ENCODE measurements at regions of chr16 and their contacts with region 1.

Region 1: GRCh38 chr16:56700195-56700594 is 17.9 kb downstream of the MT1X start:
- DNase-seq: no peak
- ATAC-seq: no peak

Region 2: DNA sequence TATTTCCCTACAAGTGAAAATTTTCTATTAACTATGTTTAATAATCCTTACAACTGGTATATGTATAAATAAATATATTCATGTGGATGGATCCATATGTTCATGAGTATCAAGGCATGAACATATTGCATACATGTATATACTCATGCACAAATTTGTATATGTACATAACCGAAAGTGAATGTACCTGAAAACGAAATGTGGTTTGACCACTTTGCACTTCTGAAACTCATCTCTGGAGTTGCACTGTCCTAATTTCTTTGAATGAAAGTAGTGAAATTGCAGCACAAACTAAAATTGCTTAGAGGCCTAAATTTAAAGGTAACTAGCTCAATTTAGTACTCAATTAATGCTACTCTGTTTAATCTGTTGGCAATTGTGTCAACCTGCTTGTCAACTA is 536.3 kb before region 1 on chr16:
- intact Hi-C with region 1: no loop called
- DNase-seq: no peak
- ATAC-seq: no peak

Region 3: DNA sequence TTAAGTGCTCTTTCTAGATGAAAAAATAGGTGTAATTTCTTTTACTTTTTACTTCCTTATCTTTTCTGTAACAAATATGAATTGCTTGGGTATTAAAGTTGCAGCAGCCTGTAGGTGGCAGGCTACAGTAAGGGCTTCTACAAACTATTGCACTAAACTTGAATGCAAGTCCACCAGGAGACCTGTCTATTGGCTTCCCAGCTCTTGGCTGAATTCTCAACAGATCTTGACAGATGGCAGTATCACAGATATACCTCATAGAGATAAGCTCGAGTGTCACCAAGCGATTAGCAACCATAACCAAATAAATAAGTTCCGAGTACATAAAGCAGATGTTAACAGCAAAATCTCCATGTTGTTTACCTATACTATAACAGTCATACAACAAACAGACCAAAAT is 186.2 kb before region 1 on chr16:
- intact Hi-C with region 1: loop called (anchors 5 kb)
- DNase-seq: no peak
- ATAC-seq: peak; percentile 82

Region 4: GRCh38 chr16:56576585-56577293 is 123.5 kb before region 1 on chr16:
- intact Hi-C with region 1: loop called (anchors 2 kb)
- DNase-seq: peak; percentile 81
- ATAC-seq: peak; percentile 90

Region 5: GRCh38 chr16:56600398-56600999 is 99.7 kb before region 1 on chr16:
- intact Hi-C with region 1: loop called (anchors 5 kb)
- DNase-seq: no peak
- ATAC-seq: peak; percentile 53

Region 6: DNA sequence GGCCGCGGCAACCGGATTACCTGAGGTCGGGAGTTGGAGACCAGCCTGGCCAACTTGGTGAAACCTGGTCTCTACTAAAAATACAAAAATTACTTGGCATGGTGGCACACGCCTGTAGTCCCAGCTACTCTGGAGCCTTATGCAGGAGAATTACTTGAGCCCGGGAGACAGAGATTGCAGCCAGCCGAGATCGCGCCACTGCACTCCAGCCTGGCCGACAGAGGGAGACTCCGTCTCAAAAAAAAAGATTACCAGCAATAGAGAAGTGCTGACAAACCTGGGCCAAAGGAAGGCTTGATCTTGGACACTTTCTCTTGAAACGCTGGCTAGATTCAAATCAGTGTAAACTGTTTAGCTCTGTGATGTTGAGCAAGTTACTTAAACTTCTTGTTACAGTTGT is 26.3 kb before region 1 on chr16:
- intact Hi-C with region 1: loop called (anchors 2 kb)
- DNase-seq: no peak
- ATAC-seq: peak; percentile 55

Measured in Right ventricle myocardium superior (tissue), 1 donor.